Psoas muscle (tissue), 8 donors: ENCODE measurements at regions of chr20 and their contacts with region 1.

Region 1: DNA sequence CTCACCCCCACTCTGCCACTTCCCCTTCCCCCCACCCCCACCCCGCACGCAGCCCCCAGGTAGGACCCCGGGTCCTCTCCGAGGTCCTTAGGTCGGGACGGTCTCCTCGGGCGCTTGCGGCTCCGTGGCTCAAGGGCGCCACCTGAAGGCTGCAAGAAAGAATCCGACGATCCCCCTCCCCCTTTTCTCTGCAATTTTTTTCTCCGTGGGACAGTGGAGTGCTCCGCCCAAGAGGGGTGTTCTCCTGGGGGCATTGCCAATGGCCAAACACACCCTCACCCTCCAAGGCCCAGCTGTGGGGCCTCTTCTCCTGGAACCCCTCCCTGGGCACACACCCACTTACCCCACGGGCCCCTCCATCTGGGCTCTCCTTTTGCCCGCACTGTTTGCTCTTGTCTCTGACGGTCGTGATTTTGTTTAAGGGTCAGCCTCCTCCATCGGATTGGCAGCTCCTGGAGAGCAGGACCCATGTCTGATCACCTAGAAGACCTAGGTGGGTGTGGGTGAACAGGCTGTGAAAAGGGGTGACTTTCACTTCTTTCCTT is 1.1 kb upstream of the TMEM74B start:
- DNase-seq: peak in 1 of 2 donors; percentile 50
- ATAC-seq: peak; percentile 60 to 76 (median 66)
- H3K4me3 ChIP-seq: peak overlapping the region; percentile 68
- H3K27ac ChIP-seq: no peak overlapping the region
- H3K4me1 ChIP-seq: no peaks in the 10 kb centered on the region
- H3K27me3 ChIP-seq: peaks cover 0 to 21% (median 4%) of the 10 kb centered on the region in 3 donors
- CTCF ChIP-seq: peak; percentile 40

Region 2: GRCh38 chr20:663315-664090 is 522.4 kb before region 1 on chr20:
- intact Hi-C with region 1: no loop called
- DNase-seq: no peak
- ATAC-seq: no peak
- H3K4me3 ChIP-seq: peak overlapping the region; percentile 28
- H3K27ac ChIP-seq: no peak overlapping the region
- H3K4me1 ChIP-seq: peaks cover 7% of the 10 kb centered on the region
- H3K27me3 ChIP-seq: peaks cover 0 to 52% (median 25%) of the 10 kb centered on the region in 3 donors
- CTCF ChIP-seq: no peak

Region 3: DNA sequence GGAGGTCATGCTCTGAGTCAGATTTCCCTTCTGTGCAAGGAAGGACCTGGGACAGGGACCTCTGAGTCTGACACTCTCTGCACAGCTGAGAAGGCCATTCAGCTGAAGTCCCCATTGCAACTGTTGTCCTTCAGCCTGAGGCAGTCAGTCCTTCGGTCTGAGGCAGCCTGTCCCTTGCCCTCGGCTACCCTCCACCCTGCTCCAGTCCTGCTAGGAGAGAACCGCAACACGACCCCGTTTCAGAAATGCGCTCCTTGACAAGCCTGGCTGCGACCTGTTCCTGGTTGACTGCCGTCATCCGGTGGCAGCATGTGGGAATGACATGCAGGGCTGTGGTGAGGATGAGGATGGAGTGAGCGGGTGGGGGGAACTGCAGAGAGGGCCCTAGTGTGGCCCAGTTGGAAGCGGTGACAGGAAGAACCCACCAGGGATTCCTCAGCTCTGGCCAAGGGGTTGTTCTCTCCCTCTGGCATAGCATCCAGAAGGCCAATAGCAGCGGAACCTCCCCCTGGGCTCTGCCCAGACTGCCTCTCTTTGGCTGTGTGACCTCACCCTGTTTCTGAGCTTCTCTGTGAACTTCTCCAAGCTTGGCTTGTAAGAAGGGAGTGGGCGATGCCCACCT is 229.4 kb before region 1 on chr20:
- intact Hi-C with region 1: loop called in 1 of 2 experiments (anchors 10 kb)
- DNase-seq: peak; percentile 46 to 81
- ATAC-seq: peak; percentile 82 to 95 (median 90)
- H3K4me3 ChIP-seq: no peak overlapping the region
- H3K27ac ChIP-seq: no peak overlapping the region
- H3K4me1 ChIP-seq: no peaks in the 10 kb centered on the region
- H3K27me3 ChIP-seq: peaks cover 0 to 29% (median 0%) of the 10 kb centered on the region in 3 donors
- CTCF ChIP-seq: peak; percentile 98

Region 4: DNA sequence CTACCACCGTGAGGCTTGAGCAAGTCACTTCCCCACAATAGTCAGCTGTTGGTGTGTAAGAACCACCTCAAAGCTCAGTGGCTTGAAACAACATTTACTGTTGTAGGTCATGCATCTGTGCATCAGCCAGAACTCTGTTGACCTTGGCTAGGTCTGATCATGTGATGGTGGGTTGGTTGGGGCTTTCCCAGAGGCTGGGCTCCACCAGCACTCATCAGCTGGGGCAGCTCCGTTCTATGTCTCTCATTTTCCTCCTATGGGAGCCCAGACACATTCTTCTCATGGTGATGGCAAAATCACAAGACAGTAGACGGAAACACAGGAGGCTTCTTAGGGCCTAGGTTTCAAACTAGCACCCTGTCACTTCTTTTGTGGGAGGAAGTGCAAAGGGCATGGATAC is 110.2 kb before region 1 on chr20:
- intact Hi-C with region 1: no loop called
- DNase-seq: no peak
- ATAC-seq: no peak
- H3K4me3 ChIP-seq: no peak overlapping the region
- H3K27ac ChIP-seq: no peak overlapping the region
- H3K4me1 ChIP-seq: no peaks in the 10 kb centered on the region
- H3K27me3 ChIP-seq: peaks cover 0 to 2% (median 0%) of the 10 kb centered on the region in 3 donors
- CTCF ChIP-seq: no peak